ENCODE measurements at regions of chr10 and their contacts with region 1.

Region 1: GRCh38 chr10:5889624-5890451 is at the starts of genes ANKRD16 and FBH1:
- DNase-seq: peak; percentile 98
- H3K4me3 ChIP-seq: peak within 1 kb of the TSS; percentile 87
- H3K27ac ChIP-seq: peak within 1 kb of the TSS; percentile 57
- H3K27me3 ChIP-seq: no peaks in the 10 kb centered on the region
- CTCF ChIP-seq: no peak
- polyA plus RNA-seq, gene ANKRD16: 5.9 and 6.7 TPM in 2 replicates
- polyA plus RNA-seq, gene FBH1: 65.2 and 77.5 TPM in 2 replicates

Region 2: GRCh38 chr10:5434017-5434753 is 455.7 kb before region 1 on chr10:
- CTCF ChIA-PET with region 1: interaction called, 14 read pairs
- POLR2A ChIA-PET with region 1: no interaction called
- DNase-seq: no peak
- H3K4me3 ChIP-seq: no peak overlapping the region
- H3K27ac ChIP-seq: peak overlapping the region; percentile 48
- H3K27me3 ChIP-seq: no peaks in the 10 kb centered on the region
- CTCF ChIP-seq: peak; percentile 77

Region 3: GRCh38 chr10:5813287-5814109 is 76.3 kb before region 1 on chr10 and contains the start of gene GDI2:
- CTCF ChIA-PET with region 1: no interaction called
- POLR2A ChIA-PET with region 1: interaction called, 10 read pairs
- DNase-seq: peak; percentile 88
- H3K4me3 ChIP-seq: peak within 1 kb of the TSS; percentile 92
- H3K27ac ChIP-seq: peak within 1 kb of the TSS; percentile 82
- H3K27me3 ChIP-seq: no peaks in the 10 kb centered on the region
- CTCF ChIP-seq: no peak
- polyA plus RNA-seq, gene GDI2: 263 and 326 TPM in 2 replicates

Region 4: DNA sequence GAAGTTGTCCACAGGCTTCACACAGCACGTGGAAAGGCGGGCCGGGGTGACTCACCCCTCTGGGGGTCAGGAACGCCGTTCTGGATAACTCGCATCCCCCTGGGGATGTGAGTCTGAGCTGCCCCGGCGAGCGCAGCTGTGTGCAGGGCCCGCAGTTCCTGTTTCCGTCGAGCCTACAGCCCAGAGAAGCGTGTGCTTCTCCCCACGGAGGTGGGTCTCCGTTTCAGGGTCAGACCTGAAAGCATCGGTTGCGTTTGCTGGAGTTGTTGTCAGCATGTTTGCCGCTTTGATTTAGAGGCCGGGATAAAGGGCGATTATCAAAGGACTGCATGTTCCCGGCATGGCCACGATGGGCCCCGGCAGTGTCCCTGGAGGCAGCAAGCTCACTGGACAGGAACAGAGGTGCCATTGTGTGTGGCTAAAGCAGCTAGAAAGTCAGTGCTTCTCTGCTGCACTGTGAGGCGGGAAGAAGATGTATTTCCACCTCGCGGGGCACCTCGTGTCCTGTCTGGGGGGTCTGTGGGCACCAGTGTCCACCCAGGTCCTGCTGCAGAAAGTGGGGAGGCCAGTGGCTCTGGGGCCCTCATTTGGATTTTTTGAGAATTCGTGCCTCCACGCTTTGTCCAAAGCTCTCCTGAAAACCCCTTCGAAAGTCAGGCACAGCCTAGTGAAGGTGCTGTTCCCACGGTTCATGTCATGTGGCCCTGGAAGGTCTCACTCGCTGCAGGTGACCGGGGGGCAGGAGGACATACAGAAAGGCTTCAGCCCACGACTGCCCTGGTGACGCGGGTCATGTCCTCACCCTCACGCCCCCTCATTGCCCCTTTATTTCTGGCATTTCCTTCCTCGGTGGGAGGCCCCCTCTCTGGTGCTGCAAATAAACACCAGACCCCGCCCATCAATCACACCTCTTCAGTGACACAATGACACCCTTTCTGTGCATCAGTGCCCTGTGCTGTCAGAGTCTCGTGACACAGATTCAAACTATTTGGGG is 49.2 kb before region 1 on chr10:
- CTCF ChIA-PET with region 1: no interaction called
- POLR2A ChIA-PET with region 1: no interaction called
- DNase-seq: no peak
- H3K4me3 ChIP-seq: no peak overlapping the region
- H3K27ac ChIP-seq: no peak overlapping the region
- H3K27me3 ChIP-seq: peaks cover 2% of the 10 kb centered on the region
- CTCF ChIP-seq: no peak

Region 5: DNA sequence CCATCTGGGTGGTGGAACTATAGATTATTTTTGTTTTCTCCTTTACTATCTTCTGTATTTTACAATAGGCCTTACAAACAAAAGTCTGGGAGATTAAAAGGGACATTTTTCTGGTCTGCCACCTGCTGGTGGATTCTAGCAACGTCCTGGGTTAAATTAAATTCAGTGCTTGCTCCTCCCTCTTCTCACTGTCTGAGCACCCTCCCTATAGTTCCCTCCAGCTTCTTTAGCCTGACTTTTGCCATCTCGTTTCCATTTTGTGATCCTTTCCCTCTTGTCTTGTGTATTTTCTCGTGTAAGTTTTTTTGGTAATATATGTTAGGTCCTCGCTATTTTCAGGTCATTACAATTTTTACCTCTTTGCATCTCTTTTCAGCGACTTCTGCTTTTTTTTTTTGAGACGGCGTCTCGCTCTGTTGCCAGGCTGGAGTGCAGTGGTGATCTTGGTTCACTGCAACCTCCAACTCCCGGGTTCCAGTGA is 16.3 kb before region 1 on chr10:
- CTCF ChIA-PET with region 1: interaction called, 16 read pairs
- POLR2A ChIA-PET with region 1: interaction called, 4 read pairs
- DNase-seq: peak; percentile 55
- H3K4me3 ChIP-seq: no peak overlapping the region
- H3K27ac ChIP-seq: no peak overlapping the region
- H3K27me3 ChIP-seq: no peaks in the 10 kb centered on the region
- CTCF ChIP-seq: peak; percentile 72

Region 6: GRCh38 chr10:5944389-5945189 is 54.8 kb after region 1 on chr10:
- CTCF ChIA-PET with region 1: no interaction called
- POLR2A ChIA-PET with region 1: interaction called, 11 read pairs
- DNase-seq: peak; percentile 99
- H3K4me3 ChIP-seq: peak overlapping the region; percentile 12; the same call in 1 of the 2 replicates
- H3K27ac ChIP-seq: peak overlapping the region; percentile 100
- H3K27me3 ChIP-seq: no peaks in the 10 kb centered on the region
- CTCF ChIP-seq: no peak